ENCODE measurements at regions of chr6 and their contacts with region 1.

Region 1: DNA sequence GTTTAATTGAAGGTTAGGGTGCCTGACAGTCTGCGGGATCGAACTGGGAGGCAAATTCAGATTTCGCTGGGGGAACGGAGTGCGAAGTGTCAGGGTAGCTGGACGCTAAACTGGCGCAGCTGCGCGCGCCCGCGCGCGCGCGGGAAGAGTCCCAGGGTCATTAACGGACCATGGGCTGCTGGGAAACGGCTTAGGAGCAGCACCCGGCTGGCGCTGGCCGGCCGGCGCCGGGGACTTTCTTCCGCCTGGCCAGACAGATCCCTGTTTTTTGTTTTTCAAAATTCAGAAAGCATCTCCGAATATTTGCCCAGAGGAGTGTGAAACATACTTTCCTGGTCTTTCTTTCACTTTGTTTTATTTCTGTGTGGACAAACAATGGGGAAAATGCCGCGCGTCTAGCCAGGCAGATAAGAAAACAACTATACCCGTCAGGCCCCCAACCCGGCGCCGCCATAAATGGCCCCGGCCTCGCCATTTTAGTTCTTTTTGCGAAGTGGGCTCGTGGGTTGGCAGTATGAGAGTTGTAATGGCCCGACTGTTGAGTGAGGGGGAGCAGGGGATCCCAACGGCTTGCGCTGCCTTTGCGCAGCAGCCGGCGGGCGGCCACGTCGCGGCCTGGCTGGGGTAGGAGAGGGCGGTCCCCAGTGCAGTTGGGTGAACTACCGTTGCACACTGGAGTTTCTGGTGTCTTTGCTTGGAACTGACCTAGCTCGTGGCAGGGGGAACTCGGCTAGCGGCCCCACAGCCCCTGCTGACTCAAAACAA is 7.1 kb downstream of the HSPA1B start:
- DNase-seq: peak; percentile 88 to 93 (median 88)
- H3K4me3 ChIP-seq: peak overlapping the region; percentile 97
- H3K27ac ChIP-seq: peak overlapping the region; percentile 91 to 93
- H3K4me1 ChIP-seq: peaks cover 7% of the 10 kb centered on the region
- H3K27me3 ChIP-seq: no peaks in the 10 kb centered on the region
- CTCF ChIP-seq: peak in 2 of 3 donors; percentile 13 to 16
- EP300 ChIP-seq: no peak
- POLR2A ChIP-seq: peak; percentile 50

Region 2: GRCh38 chr6:31541658-31542521 is 292.7 kb before region 1 on chr6 and contains the start of gene DDX39B:
- intact Hi-C with region 1: loop called in 1 of 4 experiments (anchors 10 kb)
- DNase-seq: peak; percentile 93 to 97 (median 96)
- H3K4me3 ChIP-seq: peak within 1 kb of the TSS; percentile 63
- H3K27ac ChIP-seq: peak within 1 kb of the TSS; percentile 80 to 97
- H3K4me1 ChIP-seq: peaks cover 11% of the 10 kb centered on the region
- H3K27me3 ChIP-seq: no peaks in the 10 kb centered on the region
- CTCF ChIP-seq: peak in 1 of 3 donors; percentile 22
- EP300 ChIP-seq: no peak
- POLR2A ChIP-seq: peak; percentile 78
- total RNA-seq, gene DDX39B: 212 to 404 (median 362) TPM

Region 3: DNA sequence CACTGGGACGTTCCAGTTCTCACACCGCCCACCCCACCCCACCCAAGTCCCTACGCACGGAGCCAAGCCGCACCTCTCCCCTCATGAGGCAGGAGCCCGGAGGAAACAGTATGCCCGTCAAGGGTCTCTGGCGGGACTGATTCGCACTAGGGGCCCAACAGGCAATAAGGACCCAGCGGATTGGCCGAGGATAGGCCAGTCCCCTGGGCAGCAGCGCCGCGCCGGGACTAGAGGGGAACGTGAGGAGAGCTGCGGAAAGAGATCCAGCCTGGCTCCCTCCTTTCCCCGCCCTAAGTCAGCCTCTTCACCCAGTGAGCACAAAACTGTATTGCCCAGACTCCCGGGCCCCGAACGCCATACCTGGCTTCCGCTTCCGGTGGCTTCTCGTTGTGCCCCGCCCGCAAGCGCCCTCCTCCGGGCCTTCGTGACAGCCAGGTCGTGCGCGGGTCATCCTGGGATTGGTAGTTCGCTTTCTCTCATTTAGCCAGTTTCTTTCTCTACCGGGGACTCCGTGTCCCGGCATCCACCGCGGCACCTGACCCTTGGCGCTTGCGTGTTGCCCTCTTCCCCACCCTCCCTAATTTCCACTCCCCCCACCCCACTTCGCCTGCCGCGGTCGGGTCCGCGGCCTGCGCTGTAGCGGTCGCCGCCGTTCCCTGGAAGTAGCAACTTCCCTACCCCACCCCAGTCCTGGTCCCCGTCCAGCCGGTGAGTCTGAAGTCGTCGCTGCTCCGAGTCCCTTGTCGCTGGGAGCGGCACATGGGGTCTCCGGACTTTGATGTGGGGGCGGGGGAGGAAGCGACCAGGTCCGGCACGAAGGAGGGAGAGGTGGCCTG is 168.9 kb before region 1 on chr6 and contains the start of gene CSNK2B:
- intact Hi-C with region 1: loop called in 1 of 4 experiments (anchors 5 kb)
- DNase-seq: peak; percentile 97 to 99 (median 98)
- H3K4me3 ChIP-seq: peak within 1 kb of the TSS; percentile 78
- H3K27ac ChIP-seq: peak within 1 kb of the TSS; percentile 85 to 90
- H3K4me1 ChIP-seq: peaks cover 17% of the 10 kb centered on the region
- H3K27me3 ChIP-seq: no peaks in the 10 kb centered on the region
- CTCF ChIP-seq: peak in 1 of 3 donors; percentile 24
- EP300 ChIP-seq: peak; percentile 62
- POLR2A ChIP-seq: peak; percentile 84
- total RNA-seq, gene CSNK2B: 120 to 258 (median 139) TPM

Region 4: GRCh38 chr6:31680840-31681671 is 153.6 kb before region 1 on chr6 and contains the start of gene LY6G5C:
- intact Hi-C with region 1: loop called in 2 of 4 experiments (anchors 5 kb)
- DNase-seq: peak; percentile 77 to 87 (median 83)
- H3K4me3 ChIP-seq: peak within 1 kb of the TSS; percentile 48
- H3K27ac ChIP-seq: peak within 1 kb of the TSS; percentile 71 to 73
- H3K4me1 ChIP-seq: peaks cover 3% of the 10 kb centered on the region
- H3K27me3 ChIP-seq: no peaks in the 10 kb centered on the region
- CTCF ChIP-seq: peak in 2 of 3 donors; percentile 72 to 79
- EP300 ChIP-seq: no peak
- POLR2A ChIP-seq: no peak
- total RNA-seq, gene LY6G5C: 1.2 to 2.3 (median 2.0) TPM in 6 of 7 donors, not detected in the other

Region 5: DNA sequence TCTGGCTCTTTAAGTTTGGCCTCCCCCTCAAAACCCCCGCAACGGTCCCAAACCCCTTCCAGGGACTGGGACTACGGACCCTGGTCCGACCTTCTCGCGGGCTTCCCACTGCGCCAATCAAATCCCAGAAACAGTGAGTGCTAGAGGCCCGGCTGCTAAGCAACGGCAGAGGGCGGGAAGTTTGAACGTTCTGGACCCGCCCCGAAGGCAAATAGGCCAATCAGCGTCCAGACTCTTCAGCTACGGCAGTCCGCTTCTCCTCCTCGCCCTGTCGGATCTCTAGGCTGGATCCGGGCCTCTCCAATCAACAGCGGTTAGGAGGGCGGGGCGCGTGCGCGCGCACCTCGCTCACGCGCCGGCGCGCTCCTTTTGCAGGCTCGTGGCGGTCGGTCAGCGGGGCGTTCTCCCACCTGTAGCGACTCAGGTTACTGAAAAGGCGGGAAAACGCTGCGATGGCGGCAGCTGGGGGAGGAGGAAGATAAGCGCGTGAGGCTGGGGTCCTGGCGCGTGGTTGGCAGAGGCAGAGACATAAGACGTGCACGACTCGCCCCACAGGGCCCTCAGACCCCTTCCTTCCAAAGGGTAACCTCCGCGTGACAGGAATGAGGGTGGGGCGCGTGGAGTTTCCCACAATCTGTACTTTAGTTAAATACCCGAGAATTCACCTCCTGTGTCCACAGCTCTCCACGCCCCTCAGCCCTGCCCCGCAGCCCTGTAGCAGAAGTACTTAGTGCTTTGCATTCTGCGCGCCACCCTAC is 94.8 kb before region 1 on chr6 and contains the start of gene MSH5:
- intact Hi-C with region 1: loop called in 2 of 4 experiments (anchors 5 to 10 kb)
- DNase-seq: peak; percentile 96 to 98 (median 98)
- H3K4me3 ChIP-seq: peak within 1 kb of the TSS; percentile 56
- H3K27ac ChIP-seq: peak within 1 kb of the TSS in 1 of 2 donors; percentile 47
- H3K4me1 ChIP-seq: peaks cover 7% of the 10 kb centered on the region
- H3K27me3 ChIP-seq: no peaks in the 10 kb centered on the region
- CTCF ChIP-seq: no peak
- EP300 ChIP-seq: no peak
- POLR2A ChIP-seq: peak; percentile 45
- total RNA-seq, gene MSH5: 8.6 to 19.1 (median 14.5) TPM

Region 6: GRCh38 chr6:31795616-31796298 is 38.9 kb before region 1 on chr6 and contains the start of gene VARS1:
- intact Hi-C with region 1: loop called in 2 of 4 experiments (anchors 5 kb)
- DNase-seq: peak; percentile 88 to 93 (median 91)
- H3K4me3 ChIP-seq: peak within 1 kb of the TSS; percentile 67
- H3K27ac ChIP-seq: peak within 1 kb of the TSS; percentile 93 to 96
- H3K4me1 ChIP-seq: peaks cover 6% of the 10 kb centered on the region
- H3K27me3 ChIP-seq: no peaks in the 10 kb centered on the region
- CTCF ChIP-seq: peak; percentile 77 to 99 (median 99)
- EP300 ChIP-seq: no peak
- POLR2A ChIP-seq: peak; percentile 70
- total RNA-seq, gene VARS1: 16.0 to 73.6 (median 44.1) TPM

Measured in ovary (tissue), 10 donors.